ENCODE measurements at regions of chr12 and their contacts with region 1.

Region 1: GRCh38 chr12:127389923-127390322 is 877.0 kb upstream of the TMEM132C start:
- DNase-seq: peak; percentile 60
- ATAC-seq: 0 out of 2 replicates have a peak, but pooled peaks have one; percentile 24
- H3K4me3 ChIP-seq: no peak overlapping the region
- H3K27ac ChIP-seq: no peak overlapping the region
- H3K4me1 ChIP-seq: no peaks in the 10 kb centered on the region
- H3K27me3 ChIP-seq: no peaks in the 10 kb centered on the region
- CTCF ChIP-seq: no peak
- POLR2A ChIP-seq: no peak
- RAD21 ChIP-seq: no peak

Region 2: DNA sequence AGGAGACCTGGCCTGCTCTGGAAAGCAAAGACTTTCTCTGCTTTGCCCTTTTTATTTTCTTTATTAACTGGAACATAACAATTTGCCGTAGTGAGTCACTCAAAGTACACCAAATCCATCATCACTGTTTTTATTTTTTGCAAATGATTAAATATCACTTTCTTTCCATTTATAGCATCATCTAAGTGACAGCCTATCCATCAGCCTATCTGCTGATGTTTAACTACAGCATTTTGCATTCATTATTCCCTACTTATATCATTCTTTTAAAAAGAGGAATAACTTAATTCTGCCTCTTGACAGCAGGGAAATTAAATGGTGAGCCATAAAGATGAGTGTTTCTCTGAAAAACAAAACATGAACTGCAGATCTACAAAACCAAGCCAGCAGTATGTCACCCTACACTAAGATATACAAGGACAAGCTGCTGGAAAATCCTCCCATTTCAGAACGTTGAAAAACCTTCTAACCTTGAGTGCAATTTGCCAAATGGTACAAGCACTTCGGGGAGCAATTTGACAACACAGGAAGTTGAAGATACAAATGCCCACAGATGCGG is 55.7 kb after region 1 on chr12:
- CTCF ChIA-PET with region 1: no interaction called
- POLR2A ChIA-PET with region 1: no interaction called
- dilution Hi-C with region 1: no loop called
- in situ Hi-C with region 1: no loop called
- intact Hi-C with region 1: loop called (anchors 2 kb)
- DNase-seq: no peak
- ATAC-seq: no peak; the same call in 1 of the 2 replicates
- H3K4me3 ChIP-seq: no peak overlapping the region
- H3K27ac ChIP-seq: no peak overlapping the region
- H3K4me1 ChIP-seq: peaks cover 3% of the 10 kb centered on the region; the same call in 1 of the 2 replicates
- H3K27me3 ChIP-seq: no peaks in the 10 kb centered on the region
- CTCF ChIP-seq: no peak
- POLR2A ChIP-seq: no peak
- RAD21 ChIP-seq: no peak

Region 3: GRCh38 chr12:127559349-127560040 is 169.6 kb after region 1 on chr12:
- CTCF ChIA-PET with region 1: no interaction called
- POLR2A ChIA-PET with region 1: no interaction called
- dilution Hi-C with region 1: no loop called
- in situ Hi-C with region 1: no loop called
- intact Hi-C with region 1: loop called (anchors 5 kb)
- DNase-seq: peak; percentile 94
- ATAC-seq: peak; percentile 88
- H3K4me3 ChIP-seq: no peak overlapping the region
- H3K27ac ChIP-seq: peak overlapping the region; percentile 30; the same call in 1 of the 2 replicates
- H3K4me1 ChIP-seq: peaks cover 1% of the 10 kb centered on the region; the same call in 1 of the 2 replicates
- H3K27me3 ChIP-seq: no peaks in the 10 kb centered on the region
- CTCF ChIP-seq: peak; percentile 52
- POLR2A ChIP-seq: no peak
- RAD21 ChIP-seq: peak; percentile 58